CD8-positive, alpha-beta T cell (primary cell): ENCODE measurements at regions of chr3 and their contacts with region 1.

Region 1: DNA sequence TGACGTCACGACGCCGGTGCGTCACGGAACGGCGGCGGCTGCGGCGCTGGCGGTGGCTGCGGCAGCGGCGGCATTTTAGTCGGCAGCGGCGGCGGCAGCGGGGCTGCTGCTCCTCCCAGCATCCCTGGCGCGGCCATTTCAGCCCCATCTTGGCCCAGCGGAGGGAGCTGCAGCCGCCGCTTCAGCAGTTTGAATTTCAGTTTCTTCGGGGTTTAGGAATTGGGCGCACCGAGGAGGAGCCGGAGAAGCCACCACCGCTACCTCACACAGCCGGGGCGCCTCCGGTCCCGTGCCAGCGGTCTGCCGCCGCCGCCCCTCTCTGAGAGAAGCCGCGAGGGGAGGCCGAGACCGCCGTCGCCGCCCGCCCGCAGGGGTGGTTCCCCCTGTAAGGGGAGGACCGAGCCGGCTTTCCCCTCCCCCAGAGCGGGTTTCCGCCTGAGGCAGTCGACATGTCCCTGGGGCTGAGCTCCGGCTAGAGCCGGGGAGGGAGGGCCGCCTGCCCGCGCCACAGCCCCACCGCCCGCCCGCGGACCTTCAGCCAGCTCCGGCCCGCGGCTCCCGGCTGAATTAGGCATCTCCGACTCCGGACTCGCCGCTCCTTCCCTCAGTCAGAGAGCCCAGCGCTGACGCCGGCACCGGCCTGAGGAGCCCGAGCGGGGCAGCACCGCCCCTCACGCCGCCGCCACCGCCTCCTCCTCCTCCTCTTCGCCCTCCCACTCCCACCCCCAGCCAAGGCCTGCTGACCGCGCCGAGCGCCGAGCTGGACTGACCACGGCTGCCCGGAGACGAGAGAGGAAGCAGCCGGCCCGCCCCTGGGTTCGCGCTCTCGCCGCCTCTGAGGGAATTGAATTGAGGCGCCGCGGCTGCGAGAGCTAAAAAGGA is at the start of gene TSC22D2:
- DNase-seq: peak; percentile 95 to 99 (median 97)
- ATAC-seq: peak; percentile 70
- H3K4me3 ChIP-seq: peak within 1 kb of the TSS; percentile 85 to 90
- H3K4me3 Mint-ChIP-seq: peak within 1 kb of the TSS; percentile 89
- H3K27ac ChIP-seq: peak within 1 kb of the TSS; percentile 92 to 96
- H3K27ac Mint-ChIP-seq: peak within 1 kb of the TSS; percentile 99
- H3K4me1 ChIP-seq: peaks cover 16% of the 10 kb centered on the region
- H3K4me1 Mint-ChIP-seq: peaks cover 33% of the 10 kb centered on the region
- H3K27me3 ChIP-seq: no peaks in the 10 kb centered on the region
- H3K27me3 Mint-ChIP-seq: no peaks in the 10 kb centered on the region
- CTCF ChIP-seq: no peak
- total RNA-seq, gene TSC22D2: 49.3 to 51.7 TPM

Region 2: GRCh38 chr3:148991194-148992026 is 1417.1 kb before region 1 on chr3 and contains the start of gene GYG1:
- CTCF ChIA-PET with region 1: no interaction called
- POLR2A ChIA-PET with region 1: no interaction called
- intact Hi-C with region 1: loop called in 1 of 2 experiments (anchors 5 kb)
- DNase-seq: peak; percentile 59 to 94 (median 79)
- ATAC-seq: peak; percentile 81
- H3K4me3 ChIP-seq: peak within 1 kb of the TSS; percentile 46 to 66
- H3K4me3 Mint-ChIP-seq: peak within 1 kb of the TSS; percentile 80
- H3K27ac ChIP-seq: peak within 1 kb of the TSS; percentile 69 to 79
- H3K27ac Mint-ChIP-seq: peak within 1 kb of the TSS; percentile 84
- H3K4me1 ChIP-seq: peaks cover 18% of the 10 kb centered on the region
- H3K4me1 Mint-ChIP-seq: peaks cover 35% of the 10 kb centered on the region
- H3K27me3 ChIP-seq: no peaks in the 10 kb centered on the region
- H3K27me3 Mint-ChIP-seq: no peaks in the 10 kb centered on the region
- CTCF ChIP-seq: peak; percentile 45
- total RNA-seq, gene GYG1: 29.4 to 35.2 TPM

Region 3: DNA sequence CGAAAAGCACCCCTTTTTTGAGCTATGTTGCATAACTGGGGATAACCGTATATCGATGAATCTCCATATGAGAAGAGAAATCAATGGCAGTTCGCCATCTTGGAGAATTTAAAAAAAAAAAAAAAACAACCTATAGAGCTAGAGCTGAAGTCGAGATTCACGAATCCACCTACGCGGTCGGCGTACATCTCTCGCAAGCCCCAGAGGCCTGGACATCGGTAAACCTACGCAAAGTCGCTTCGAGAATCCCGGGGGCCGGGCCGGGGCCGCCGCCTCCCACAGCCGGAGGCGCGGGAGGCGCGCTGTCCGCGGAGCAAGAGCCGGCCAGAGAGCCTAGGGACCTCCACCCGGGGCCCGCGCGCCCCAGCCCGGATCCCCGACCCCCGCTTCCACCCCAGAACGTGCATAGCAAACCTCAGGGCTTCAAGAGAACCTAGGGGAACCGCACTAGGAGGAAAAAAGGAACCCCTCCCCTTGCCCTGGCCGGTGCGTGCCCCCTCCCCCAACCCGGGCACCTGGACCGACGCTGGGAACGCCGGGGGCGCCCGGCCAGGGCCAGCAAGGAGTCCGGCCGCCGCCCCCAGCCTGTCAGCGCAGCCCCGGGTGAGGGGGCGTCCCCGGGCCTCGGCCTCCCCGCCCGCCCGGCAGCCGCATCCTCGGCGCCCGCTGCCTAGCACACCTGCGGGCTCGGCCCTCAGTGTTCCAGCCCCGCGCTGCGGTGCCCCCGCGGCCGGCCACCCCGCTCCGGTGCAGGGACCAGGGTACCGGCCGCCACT is 438.3 kb before region 1 on chr3:
- CTCF ChIA-PET with region 1: no interaction called
- POLR2A ChIA-PET with region 1: interaction called, 4 read pairs
- intact Hi-C with region 1: loop called (anchors 1 to 2 kb)
- DNase-seq: peak; percentile 59 to 90 (median 82)
- ATAC-seq: peak; percentile 56
- H3K4me3 ChIP-seq: peak overlapping the region; percentile 63 to 68
- H3K4me3 Mint-ChIP-seq: peak overlapping the region; percentile 95
- H3K27ac ChIP-seq: peak overlapping the region in 1 of 2 experiments; percentile 16
- H3K27ac Mint-ChIP-seq: peak overlapping the region; percentile 88
- H3K4me1 ChIP-seq: peaks cover 10% of the 10 kb centered on the region
- H3K4me1 Mint-ChIP-seq: peaks cover 23% of the 10 kb centered on the region
- H3K27me3 ChIP-seq: peaks cover 0 to 3% of the 10 kb centered on the region in 2 experiments
- H3K27me3 Mint-ChIP-seq: peaks cover 3% of the 10 kb centered on the region
- CTCF ChIP-seq: no peak

Region 4: DNA sequence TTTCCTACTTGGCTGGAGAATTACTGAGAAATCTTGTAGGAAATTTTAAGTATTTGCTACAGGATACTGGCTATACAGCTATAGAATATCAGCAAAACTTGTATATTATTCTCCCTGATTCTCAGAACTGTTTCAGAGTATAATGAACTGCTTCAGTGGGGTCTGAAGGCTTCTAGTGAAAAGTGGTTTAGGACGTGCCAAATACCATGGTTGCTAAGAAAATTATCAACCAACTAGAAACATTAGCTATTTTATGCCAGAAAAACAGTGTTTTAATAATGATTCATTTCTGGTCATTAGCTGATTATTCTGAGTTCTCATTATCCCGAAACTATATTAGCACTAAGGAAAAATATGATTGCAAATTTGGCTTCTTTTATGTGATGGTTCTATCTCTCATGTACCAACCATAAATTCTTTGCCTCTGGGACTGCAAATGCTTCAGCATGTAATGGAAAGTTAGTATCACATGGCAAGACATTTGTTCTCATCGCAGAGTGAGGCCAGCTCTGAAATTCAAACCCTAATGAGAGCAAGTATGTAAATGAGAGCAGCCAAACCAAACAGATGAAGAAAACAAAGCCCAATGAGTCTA is 11.4 kb before region 1 on chr3:
- CTCF ChIA-PET with region 1: interaction called, 3 read pairs
- POLR2A ChIA-PET with region 1: interaction called, 18 read pairs
- intact Hi-C with region 1: no loop called
- DNase-seq: no peak
- ATAC-seq: no peak
- H3K4me3 ChIP-seq: no peak overlapping the region
- H3K4me3 Mint-ChIP-seq: no peak overlapping the region
- H3K27ac ChIP-seq: no peak overlapping the region
- H3K27ac Mint-ChIP-seq: no peak overlapping the region
- H3K4me1 ChIP-seq: no peaks in the 10 kb centered on the region
- H3K4me1 Mint-ChIP-seq: no peaks in the 10 kb centered on the region
- H3K27me3 ChIP-seq: no peaks in the 10 kb centered on the region
- H3K27me3 Mint-ChIP-seq: peaks cover 3% of the 10 kb centered on the region
- CTCF ChIP-seq: no peak

Region 5: DNA sequence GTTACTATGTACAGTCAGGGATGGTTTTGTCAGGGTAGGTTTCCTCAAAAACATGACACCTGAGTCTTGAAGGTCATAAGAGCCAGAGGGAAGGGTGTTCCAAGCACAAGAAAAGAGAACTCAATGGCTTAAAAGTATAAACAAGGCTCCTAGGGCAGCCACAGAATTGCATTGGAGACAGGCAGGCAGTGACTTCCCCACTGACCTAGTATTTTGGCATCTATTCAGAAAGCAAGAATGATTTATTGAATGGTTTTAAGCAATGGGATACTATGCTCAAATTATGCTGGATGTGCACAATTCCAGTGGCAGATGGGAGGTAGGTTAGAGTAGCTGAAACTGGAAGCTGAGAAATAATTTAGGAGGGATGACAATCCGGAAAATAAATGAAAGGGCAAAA is 53.6 kb after region 1 on chr3:
- CTCF ChIA-PET with region 1: no interaction called
- POLR2A ChIA-PET with region 1: interaction called, 7 read pairs
- intact Hi-C with region 1: loop called in 1 of 2 experiments (anchors 5 kb)
- DNase-seq: no peak
- ATAC-seq: no peak
- H3K4me3 ChIP-seq: no peak overlapping the region
- H3K4me3 Mint-ChIP-seq: no peak overlapping the region
- H3K27ac ChIP-seq: no peak overlapping the region
- H3K27ac Mint-ChIP-seq: peak overlapping the region; percentile 64
- H3K4me1 ChIP-seq: no peaks in the 10 kb centered on the region
- H3K4me1 Mint-ChIP-seq: no peaks in the 10 kb centered on the region
- H3K27me3 ChIP-seq: no peaks in the 10 kb centered on the region
- H3K27me3 Mint-ChIP-seq: no peaks in the 10 kb centered on the region
- CTCF ChIP-seq: no peak

Region 6: GRCh38 chr3:150703299-150704134 is 295.1 kb after region 1 on chr3 and contains the start of gene ERICH6:
- CTCF ChIA-PET with region 1: no interaction called
- POLR2A ChIA-PET with region 1: interaction called, 5 read pairs
- intact Hi-C with region 1: loop called in 1 of 2 experiments (anchors 1 kb)
- DNase-seq: peak; percentile 61 to 89 (median 74)
- ATAC-seq: peak; percentile 77
- H3K4me3 ChIP-seq: peak within 1 kb of the TSS; percentile 69 to 89
- H3K4me3 Mint-ChIP-seq: peak within 1 kb of the TSS; percentile 96
- H3K27ac ChIP-seq: peak within 1 kb of the TSS; percentile 83 to 98
- H3K27ac Mint-ChIP-seq: peak within 1 kb of the TSS; percentile 94
- H3K4me1 ChIP-seq: peaks cover 9% of the 10 kb centered on the region
- H3K4me1 Mint-ChIP-seq: peaks cover 23% of the 10 kb centered on the region
- H3K27me3 ChIP-seq: no peaks in the 10 kb centered on the region
- H3K27me3 Mint-ChIP-seq: no peaks in the 10 kb centered on the region
- CTCF ChIP-seq: no peak
- total RNA-seq, gene ERICH6: 0.28 to 0.52 TPM